BJ (cell line): ENCODE measurements at regions of chr10 and their contacts with region 1.

Region 1: GRCh38 chr10:103193107-103193819 is at the start of gene NT5C2:
- DNase-seq: no peak
- H3K4me3 ChIP-seq: peak within 1 kb of the TSS; percentile 89
- H3K27me3 ChIP-seq: no peaks in the 10 kb centered on the region
- CTCF ChIP-seq: no peak
- polyA plus RNA-seq, gene NT5C2: 49.3 and 85.0 TPM in 2 replicates

Region 2: DNA sequence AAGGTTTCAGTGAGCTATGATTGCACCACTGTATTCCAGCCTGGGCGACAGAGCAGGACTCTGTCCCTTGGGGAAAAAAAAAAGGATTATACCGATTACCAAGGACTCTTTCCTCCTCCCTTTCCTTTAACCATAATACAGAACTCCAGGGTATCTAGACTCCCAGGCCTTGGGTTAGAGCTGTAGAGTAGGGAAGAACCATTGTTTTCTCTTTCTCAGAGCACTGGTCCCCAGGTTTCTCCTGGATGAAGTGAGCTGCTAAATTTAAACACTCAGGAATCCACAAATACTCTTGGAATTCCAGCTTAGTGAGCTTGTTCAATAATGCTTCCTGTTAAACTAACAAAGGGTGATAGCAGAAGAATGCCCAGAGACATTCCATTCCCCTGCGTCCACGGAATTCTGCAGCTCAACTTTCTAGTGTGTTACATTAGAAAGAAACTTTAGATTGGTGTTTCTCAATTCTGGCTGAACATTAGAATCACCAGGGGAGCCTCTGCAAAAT is 37.8 kb after region 1 on chr10:
- CTCF ChIA-PET with region 1: interaction called, 3 read pairs
- POLR2A ChIA-PET with region 1: interaction called, 12 read pairs
- DNase-seq: peak; percentile 90
- H3K4me3 ChIP-seq: no peak overlapping the region
- H3K27me3 ChIP-seq: no peaks in the 10 kb centered on the region
- CTCF ChIP-seq: no peak

Region 3: DNA sequence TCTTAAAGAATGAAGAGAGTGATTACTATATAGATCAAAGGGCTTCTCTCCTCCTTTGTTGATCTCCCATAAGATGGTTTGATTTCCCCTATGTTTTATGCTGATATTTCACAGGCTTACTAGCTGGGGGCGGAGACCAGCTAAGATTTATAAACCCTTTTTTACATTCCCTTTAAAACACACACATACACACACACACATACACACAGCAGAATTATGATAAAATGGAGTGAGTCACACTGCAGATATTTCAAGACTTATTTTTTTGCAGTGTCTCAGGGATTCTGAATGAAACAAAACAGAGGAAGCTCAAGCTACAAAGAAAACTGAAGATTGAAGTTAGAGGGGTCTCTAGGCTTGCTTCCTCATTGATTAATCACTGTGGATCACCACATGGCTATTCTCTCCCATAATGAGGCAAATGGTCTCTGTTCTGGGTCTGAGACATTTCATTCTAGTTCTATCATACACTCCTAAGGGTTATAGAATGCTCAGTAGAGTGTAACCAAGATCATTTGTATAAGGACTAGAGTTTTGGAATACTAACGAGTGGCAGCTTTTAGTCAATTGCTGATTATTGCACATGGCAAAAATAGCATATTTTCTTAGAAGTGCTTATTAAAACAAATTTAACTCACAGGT is 102.2 kb after region 1 on chr10:
- CTCF ChIA-PET with region 1: no interaction called
- POLR2A ChIA-PET with region 1: no interaction called
- DNase-seq: peak; percentile 69
- H3K4me3 ChIP-seq: no peak overlapping the region
- H3K27me3 ChIP-seq: no peaks in the 10 kb centered on the region
- CTCF ChIP-seq: no peak